ENCODE measurements at regions of chr6 and their contacts with region 1.

Region 1: DNA sequence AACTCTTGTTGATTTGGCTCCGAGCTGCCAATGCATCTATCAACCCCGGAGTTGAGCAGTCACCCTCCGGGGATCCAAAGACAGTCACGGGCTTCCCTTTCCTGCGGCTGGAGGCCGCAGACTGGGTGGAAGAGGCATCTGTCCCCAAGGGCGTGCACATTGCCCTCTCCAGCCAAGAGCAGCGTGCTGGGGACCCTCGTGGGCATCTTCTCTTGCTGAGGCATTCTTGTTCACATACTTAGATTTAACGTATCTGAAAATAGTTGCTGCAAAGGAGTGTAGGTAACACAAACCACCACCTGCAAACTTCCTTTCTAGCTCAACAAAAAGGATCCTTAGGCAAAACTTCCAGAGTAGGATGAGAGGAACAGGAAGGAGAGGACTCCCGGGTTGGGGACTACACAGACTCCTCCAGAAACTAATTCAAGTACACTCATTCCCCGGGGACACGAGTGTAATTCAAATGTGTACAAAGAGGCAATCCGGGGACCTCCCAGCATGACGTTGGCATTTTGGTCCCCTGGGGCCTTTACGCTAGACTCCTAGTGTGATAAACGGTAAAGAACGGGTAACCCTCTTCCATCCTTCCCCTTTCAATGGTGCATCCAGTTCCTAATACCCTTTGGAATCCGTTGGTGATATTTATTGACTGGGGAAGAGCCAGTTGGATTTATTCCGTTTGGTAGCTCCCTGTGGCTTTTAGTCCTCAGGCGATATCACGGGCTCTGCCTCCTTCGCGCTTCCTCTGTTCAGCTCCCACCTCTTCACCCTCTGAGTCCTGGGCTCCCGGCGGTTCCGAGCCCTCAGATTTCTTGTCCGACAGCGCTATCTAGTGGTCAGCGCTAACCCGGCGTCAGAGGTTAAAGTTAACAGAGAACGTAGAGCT is 2.7 kb upstream of the COL12A1 start:
- DNase-seq: peak; percentile 42 to 88 (median 73)
- ATAC-seq: peak; percentile 81 to 87 (median 82)
- H3K4me3 ChIP-seq: peak overlapping the region; percentile 16 to 64
- H3K4me3 Mint-ChIP-seq: peak overlapping the region; percentile 53 to 72 (median 71)
- H3K27ac ChIP-seq: no peak overlapping the region
- H3K27ac Mint-ChIP-seq: peak overlapping the region in 1 of 2 donors; percentile 32
- H3K4me1 ChIP-seq: peaks cover 3 to 54% of the 10 kb centered on the region in 2 experiments
- H3K4me1 Mint-ChIP-seq: peaks cover 50 to 54% (median 52%) of the 10 kb centered on the region in 3 donors
- H3K27me3 ChIP-seq: peaks cover 9 to 61% of the 10 kb centered on the region in 2 experiments
- H3K27me3 Mint-ChIP-seq: peaks cover 63 to 67% of the 10 kb centered on the region in 2 donors

Region 2: GRCh38 chr6:73675466-73676098 is 1533.0 kb before region 1 on chr6:
- CTCF ChIA-PET with region 1: interaction called, 5 to 18 read pairs
- POLR2A ChIA-PET with region 1: no interaction called
- DNase-seq: peak in 33 of 35 experiments; percentile 8 to 78 (median 48)
- ATAC-seq: peak; percentile 64 to 75 (median 68)
- H3K4me3 ChIP-seq: no peak overlapping the region
- H3K4me3 Mint-ChIP-seq: no peak overlapping the region
- H3K27ac ChIP-seq: no peak overlapping the region
- H3K27ac Mint-ChIP-seq: no peak overlapping the region
- H3K4me1 ChIP-seq: no peaks in the 10 kb centered on the region
- H3K4me1 Mint-ChIP-seq: no peaks in the 10 kb centered on the region
- H3K27me3 ChIP-seq: peaks cover 0 to 15% of the 10 kb centered on the region in 2 experiments
- H3K27me3 Mint-ChIP-seq: peaks cover 15 to 18% of the 10 kb centered on the region in 2 donors

Region 3: GRCh38 chr6:73739096-73739495 is 1469.4 kb before region 1 on chr6:
- CTCF ChIA-PET with region 1: interaction called, 117 to 213 read pairs
- POLR2A ChIA-PET with region 1: interaction called in 1 of 2 experiments, 8 read pairs
- DNase-seq: peak in 2 of 35 experiments; percentile 0 to 80
- ATAC-seq: peak in 2 of 4 experiments; percentile 42 to 62
- H3K4me3 ChIP-seq: no peak overlapping the region
- H3K4me3 Mint-ChIP-seq: no peak overlapping the region
- H3K27ac ChIP-seq: no peak overlapping the region
- H3K27ac Mint-ChIP-seq: no peak overlapping the region
- H3K4me1 ChIP-seq: no peaks in the 10 kb centered on the region
- H3K4me1 Mint-ChIP-seq: no peaks in the 10 kb centered on the region
- H3K27me3 ChIP-seq: no peaks in the 10 kb centered on the region
- H3K27me3 Mint-ChIP-seq: no peaks in the 10 kb centered on the region

Region 4: GRCh38 chr6:73803562-73804241 is 1404.8 kb before region 1 on chr6:
- CTCF ChIA-PET with region 1: no interaction called
- POLR2A ChIA-PET with region 1: no interaction called
- DNase-seq: peak in 1 of 35 experiments; percentile 1
- ATAC-seq: no peak
- H3K4me3 ChIP-seq: no peak overlapping the region
- H3K4me3 Mint-ChIP-seq: no peak overlapping the region
- H3K27ac ChIP-seq: no peak overlapping the region
- H3K27ac Mint-ChIP-seq: no peak overlapping the region
- H3K4me1 ChIP-seq: no peaks in the 10 kb centered on the region
- H3K4me1 Mint-ChIP-seq: no peaks in the 10 kb centered on the region
- H3K27me3 ChIP-seq: no peaks in the 10 kb centered on the region
- H3K27me3 Mint-ChIP-seq: no peaks in the 10 kb centered on the region

Region 5: GRCh38 chr6:73854998-73855718 is 1353.4 kb before region 1 on chr6:
- CTCF ChIA-PET with region 1: interaction called, 22 read pairs
- POLR2A ChIA-PET with region 1: no interaction called
- DNase-seq: peak in 7 of 35 experiments; percentile 2 to 66 (median 17)
- ATAC-seq: no peak
- H3K4me3 ChIP-seq: no peak overlapping the region
- H3K4me3 Mint-ChIP-seq: no peak overlapping the region
- H3K27ac ChIP-seq: no peak overlapping the region
- H3K27ac Mint-ChIP-seq: no peak overlapping the region
- H3K4me1 ChIP-seq: no peaks in the 10 kb centered on the region
- H3K4me1 Mint-ChIP-seq: no peaks in the 10 kb centered on the region
- H3K27me3 ChIP-seq: no peaks in the 10 kb centered on the region
- H3K27me3 Mint-ChIP-seq: no peaks in the 10 kb centered on the region

Region 6: DNA sequence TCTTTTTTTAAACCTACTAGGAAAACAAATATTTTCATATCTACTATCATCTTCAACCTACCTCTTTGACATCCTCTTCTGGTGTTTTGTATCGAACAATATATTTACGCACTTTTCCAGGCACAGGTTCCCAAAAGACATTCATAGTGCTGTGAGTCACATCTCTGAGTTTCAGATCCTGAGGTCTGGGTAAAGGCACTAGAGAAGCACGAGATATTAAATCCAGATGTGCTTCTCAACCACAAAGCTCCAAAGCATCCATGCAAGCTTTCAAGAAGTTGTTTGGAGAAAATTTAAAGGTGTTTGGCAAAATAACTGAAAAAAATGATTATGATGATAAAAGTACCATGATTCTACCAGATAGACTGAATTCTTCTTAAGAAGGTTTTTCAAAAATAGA is 65.3 kb before region 1 on chr6:
- CTCF ChIA-PET with region 1: no interaction called
- POLR2A ChIA-PET with region 1: no interaction called
- DNase-seq: no peak
- ATAC-seq: no peak
- H3K4me3 ChIP-seq: no peak overlapping the region
- H3K4me3 Mint-ChIP-seq: no peak overlapping the region
- H3K27ac ChIP-seq: no peak overlapping the region
- H3K27ac Mint-ChIP-seq: no peak overlapping the region
- H3K4me1 ChIP-seq: no peaks in the 10 kb centered on the region
- H3K4me1 Mint-ChIP-seq: no peaks in the 10 kb centered on the region
- H3K27me3 ChIP-seq: no peaks in the 10 kb centered on the region
- H3K27me3 Mint-ChIP-seq: peaks cover 0 to 1% of the 10 kb centered on the region in 2 donors

Region 7: GRCh38 chr6:75220357-75220756 is 11.8 kb after region 1 on chr6:
- CTCF ChIA-PET with region 1: interaction called, 13 to 17 read pairs
- POLR2A ChIA-PET with region 1: no interaction called
- DNase-seq: no peak
- ATAC-seq: no peak
- H3K4me3 ChIP-seq: no peak overlapping the region
- H3K4me3 Mint-ChIP-seq: no peak overlapping the region
- H3K27ac ChIP-seq: no peak overlapping the region
- H3K27ac Mint-ChIP-seq: no peak overlapping the region
- H3K4me1 ChIP-seq: no peaks in the 10 kb centered on the region
- H3K4me1 Mint-ChIP-seq: no peaks in the 10 kb centered on the region
- H3K27me3 ChIP-seq: peaks cover 0 to 8% of the 10 kb centered on the region in 2 experiments
- H3K27me3 Mint-ChIP-seq: peaks cover 33 to 45% of the 10 kb centered on the region in 2 donors

Measured in T-cell (primary cell).